ENCODE measurements at regions of chr6 and their contacts with region 1.

Region 1: GRCh38 chr6:29649701-29650673 is 6.9 kb upstream of the MOG start:
- H3K4me3 Mint-ChIP-seq: peak overlapping the region; percentile 95
- H3K27ac Mint-ChIP-seq: peak overlapping the region; percentile 100
- H3K4me1 Mint-ChIP-seq: no peaks in the 10 kb centered on the region
- H3K27me3 Mint-ChIP-seq: peaks cover 8% of the 10 kb centered on the region

Region 2: GRCh38 chr6:29632789-29633533 is 17.0 kb before region 1 on chr6 and contains the start of gene GABBR1:
- intact Hi-C with region 1: loop called (anchors 2 kb)
- H3K4me3 Mint-ChIP-seq: peak within 1 kb of the TSS; percentile 86
- H3K27ac Mint-ChIP-seq: peak within 1 kb of the TSS; percentile 86
- H3K4me1 Mint-ChIP-seq: peaks cover 62% of the 10 kb centered on the region
- H3K27me3 Mint-ChIP-seq: peaks cover 43% of the 10 kb centered on the region

Region 3: DNA sequence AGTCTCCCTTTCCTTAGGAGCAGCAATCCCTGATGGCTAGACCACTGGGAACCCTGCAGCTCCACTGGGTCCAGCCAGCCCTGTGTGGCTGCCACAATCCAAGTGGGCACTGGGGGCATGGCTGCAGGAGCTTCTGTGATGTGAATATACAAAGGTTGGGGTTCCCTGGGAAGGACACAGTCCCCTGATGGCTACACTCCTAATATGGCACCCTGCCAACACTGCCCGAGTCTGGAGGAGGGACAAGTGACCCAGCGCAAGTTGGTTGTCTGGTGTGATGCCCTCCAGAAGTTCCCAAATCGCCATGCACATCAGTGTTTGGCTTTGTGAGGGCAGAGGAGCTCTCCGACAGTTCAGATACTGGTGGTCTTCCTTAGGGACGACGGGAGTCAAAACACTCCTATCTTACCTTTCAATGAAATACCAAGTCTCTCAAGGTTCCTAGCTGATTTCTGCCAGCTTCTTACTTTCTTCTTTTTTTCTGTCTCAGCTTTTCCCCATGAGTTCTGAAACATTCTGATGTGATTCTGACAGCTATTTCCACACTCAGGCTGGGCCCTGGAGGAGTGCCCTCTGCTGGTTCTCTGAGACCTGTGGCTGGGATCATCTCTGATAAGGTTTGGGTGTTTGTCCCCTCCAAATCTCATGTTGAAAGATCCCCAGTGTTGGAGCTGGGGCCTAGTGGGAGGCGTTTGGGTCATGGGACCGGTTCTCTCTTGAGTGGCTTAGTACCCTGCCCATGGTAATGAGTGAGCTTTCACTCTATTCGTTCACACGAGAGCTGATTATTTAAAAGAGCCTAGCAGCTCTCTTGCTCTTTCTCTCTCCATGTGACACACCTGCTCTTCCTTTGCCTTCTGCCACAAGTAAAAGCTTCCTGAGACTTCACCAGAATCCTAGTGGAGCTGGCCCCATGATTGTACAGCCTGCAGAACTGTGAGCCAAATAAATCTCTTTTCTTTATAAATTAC is 46.5 kb after region 1 on chr6:
- intact Hi-C with region 1: loop called (anchors 2 kb)
- H3K4me3 Mint-ChIP-seq: no peak overlapping the region
- H3K27ac Mint-ChIP-seq: no peak overlapping the region
- H3K4me1 Mint-ChIP-seq: peaks cover 15% of the 10 kb centered on the region
- H3K27me3 Mint-ChIP-seq: peaks cover 22% of the 10 kb centered on the region

Region 4: DNA sequence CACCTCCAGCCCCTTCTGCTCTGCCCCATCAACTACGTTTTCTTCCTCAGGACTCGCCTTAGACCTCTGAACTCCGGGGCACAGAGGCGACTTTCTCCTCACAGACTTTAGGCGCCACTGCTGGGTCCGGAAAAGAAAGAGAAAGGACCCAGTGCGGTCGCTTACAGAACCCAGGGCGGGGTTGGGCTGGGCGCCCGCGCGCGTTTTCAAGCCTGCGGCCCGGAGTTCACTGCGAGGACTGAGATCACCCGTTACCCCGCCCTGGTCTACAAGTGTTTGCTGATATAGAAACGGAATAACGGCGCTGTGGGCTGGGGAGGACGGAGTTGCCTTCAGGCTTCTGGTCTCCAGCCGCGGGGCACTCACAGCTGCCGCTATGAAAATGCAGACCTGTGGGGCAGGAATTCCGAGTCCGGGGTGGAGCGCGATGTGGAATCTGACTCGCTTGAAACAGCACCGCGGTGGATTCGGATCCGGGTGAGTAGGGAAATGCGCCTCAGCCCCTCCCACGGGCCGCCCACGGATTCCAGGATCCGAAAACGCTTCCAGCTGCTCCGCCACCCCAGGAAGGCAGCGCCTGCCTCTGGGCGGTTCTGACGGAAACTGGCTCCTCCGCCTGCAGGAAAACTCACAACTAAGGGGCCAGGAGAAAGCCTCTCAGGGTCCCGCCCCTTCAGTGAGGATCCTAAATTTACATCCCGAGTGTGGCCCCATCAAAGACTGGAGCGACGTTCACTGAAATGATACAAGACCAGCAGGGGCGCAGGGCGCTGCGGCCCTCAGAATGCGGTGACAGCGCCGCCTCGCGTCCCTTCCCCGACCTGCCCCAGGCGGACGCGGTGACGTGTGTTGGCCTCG is 102.7 kb after region 1 on chr6:
- intact Hi-C with region 1: loop called (anchors 2 kb)
- H3K4me3 Mint-ChIP-seq: peak overlapping the region; percentile 84
- H3K27ac Mint-ChIP-seq: peak overlapping the region; percentile 92
- H3K4me1 Mint-ChIP-seq: peaks cover 29% of the 10 kb centered on the region
- H3K27me3 Mint-ChIP-seq: peaks cover 15% of the 10 kb centered on the region